ENCODE measurements at regions of chr15 and their contacts with region 1.

Region 1: DNA sequence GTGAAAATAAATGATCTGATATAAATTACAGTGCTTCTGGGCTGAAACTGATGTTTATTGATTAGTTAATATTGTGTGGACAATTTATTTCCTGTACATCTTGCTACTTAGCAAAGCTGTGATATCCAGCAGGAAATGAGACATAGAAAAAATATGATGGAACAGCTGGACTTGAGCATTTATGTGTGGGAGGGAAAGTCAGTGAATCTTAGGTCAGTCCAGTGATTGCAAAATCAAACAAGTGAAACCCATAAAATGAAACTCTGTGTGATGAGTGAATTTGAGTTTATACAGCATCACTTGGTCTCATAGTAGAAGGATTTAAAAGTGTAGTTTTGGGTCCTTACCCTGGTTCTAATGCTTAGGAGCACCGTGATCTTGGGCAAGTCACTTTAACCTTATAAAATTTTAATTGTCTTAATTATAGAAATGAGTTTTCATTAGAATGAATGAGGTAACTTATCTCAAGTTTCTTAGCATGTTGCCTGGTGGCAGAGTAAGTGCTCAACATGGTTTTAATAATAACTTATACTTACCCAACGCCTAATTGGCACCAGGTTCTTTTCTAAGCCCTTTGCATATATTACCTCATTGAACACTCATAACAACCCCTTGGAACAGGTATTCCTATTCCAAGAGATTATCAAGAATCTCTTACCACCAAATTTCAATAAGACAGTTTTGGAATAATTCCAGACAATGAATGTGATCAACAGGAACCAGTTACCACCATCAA is 194.6 kb downstream of the ADAMTSL3 start:
- DNase-seq: no peak
- ATAC-seq: peak; percentile 43 to 62 (median 52)
- H3K4me3 ChIP-seq: no peak overlapping the region
- H3K27ac ChIP-seq: peak overlapping the region in 10 of 12 donors; percentile 26 to 75 (median 62)
- H3K4me1 ChIP-seq: peaks cover 0 to 73% (median 20%) of the 10 kb centered on the region in 12 donors
- H3K27me3 ChIP-seq: no peaks in the 10 kb centered on the region
- CTCF ChIP-seq: no peak
- POLR2A ChIP-seq: no peak

Region 2: GRCh38 chr15:83526319-83526718 is 322.2 kb before region 1 on chr15:
- intact Hi-C with region 1: no loop called
- DNase-seq: no peak
- ATAC-seq: no peak
- H3K4me3 ChIP-seq: no peak overlapping the region
- H3K27ac ChIP-seq: no peak overlapping the region
- H3K4me1 ChIP-seq: no peaks in the 10 kb centered on the region
- H3K27me3 ChIP-seq: peaks cover 0 to 4% (median 0%) of the 10 kb centered on the region in 9 donors
- CTCF ChIP-seq: no peak
- POLR2A ChIP-seq: no peak

Region 3: GRCh38 chr15:83653639-83654378 is 194.7 kb before region 1 on chr15 and contains the start of gene ADAMTSL3:
- intact Hi-C with region 1: loop called in 3 of 10 experiments (anchors 5 to 10 kb)
- DNase-seq: peak; percentile 84 to 92 (median 88)
- ATAC-seq: peak; percentile 3 to 81 (median 57)
- H3K4me3 ChIP-seq: peak within 1 kb of the TSS; percentile 43 to 85 (median 68)
- H3K27ac ChIP-seq: peak within 1 kb of the TSS; percentile 14 to 90 (median 82)
- H3K4me1 ChIP-seq: peaks cover 0 to 45% (median 11%) of the 10 kb centered on the region in 12 donors
- H3K27me3 ChIP-seq: peaks cover 0 to 18% (median 0%) of the 10 kb centered on the region in 9 donors
- CTCF ChIP-seq: peak in 5 of 12 donors; percentile 6 to 31 (median 13)
- POLR2A ChIP-seq: peak in 1 of 2 donors; percentile 29
- total RNA-seq, gene ADAMTSL3: 6.6 to 13.2 (median 7.7) TPM

Region 4: DNA sequence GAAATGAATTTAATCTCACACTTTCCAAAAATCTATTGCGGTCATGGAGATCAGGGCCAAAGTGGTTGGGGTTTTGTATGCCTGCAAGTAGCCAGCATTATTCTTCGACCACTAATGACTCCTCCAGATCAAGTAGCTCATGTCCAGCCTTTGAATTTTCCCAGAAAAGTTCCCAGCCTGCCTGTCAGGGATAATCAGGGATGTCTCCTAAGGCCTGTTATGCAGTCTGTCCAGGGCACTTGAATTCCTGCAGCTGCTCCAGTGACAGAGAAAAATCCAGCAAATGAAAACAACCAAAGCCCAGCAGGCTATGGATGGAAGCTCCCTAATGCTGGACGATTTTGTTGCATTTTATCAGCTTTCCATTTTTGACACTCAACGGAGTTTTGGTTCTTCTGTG is 20.9 kb after region 1 on chr15:
- intact Hi-C with region 1: loop called in 1 of 10 experiments (anchors 2 kb)
- DNase-seq: peak in 3 of 5 donors; percentile 43 to 52 (median 46)
- ATAC-seq: peak; percentile 72 to 94 (median 79)
- H3K4me3 ChIP-seq: no peak overlapping the region
- H3K27ac ChIP-seq: peak overlapping the region in 8 of 12 donors; percentile 5 to 60 (median 36)
- H3K4me1 ChIP-seq: peaks cover 0 to 35% (median 7%) of the 10 kb centered on the region in 12 donors
- H3K27me3 ChIP-seq: no peaks in the 10 kb centered on the region
- CTCF ChIP-seq: no peak
- POLR2A ChIP-seq: no peak